Heart right ventricle (tissue), 16 donors: ENCODE measurements at regions of chr3 and their contacts with region 1.

Region 1: GRCh38 chr3:126752303-126752842 is 48.3 kb downstream of the CHCHD6 start:
- DNase-seq: peak; percentile 79 to 80
- ATAC-seq: peak; percentile 87 to 94 (median 91)
- H3K4me3 ChIP-seq: no peak overlapping the region
- H3K27ac ChIP-seq: no peak overlapping the region
- H3K4me1 ChIP-seq: peaks cover 0 to 40% (median 4%) of the 10 kb centered on the region in 9 donors
- H3K27me3 ChIP-seq: no peaks in the 10 kb centered on the region
- CTCF ChIP-seq: peak; percentile 66 to 93 (median 87)

Region 2: DNA sequence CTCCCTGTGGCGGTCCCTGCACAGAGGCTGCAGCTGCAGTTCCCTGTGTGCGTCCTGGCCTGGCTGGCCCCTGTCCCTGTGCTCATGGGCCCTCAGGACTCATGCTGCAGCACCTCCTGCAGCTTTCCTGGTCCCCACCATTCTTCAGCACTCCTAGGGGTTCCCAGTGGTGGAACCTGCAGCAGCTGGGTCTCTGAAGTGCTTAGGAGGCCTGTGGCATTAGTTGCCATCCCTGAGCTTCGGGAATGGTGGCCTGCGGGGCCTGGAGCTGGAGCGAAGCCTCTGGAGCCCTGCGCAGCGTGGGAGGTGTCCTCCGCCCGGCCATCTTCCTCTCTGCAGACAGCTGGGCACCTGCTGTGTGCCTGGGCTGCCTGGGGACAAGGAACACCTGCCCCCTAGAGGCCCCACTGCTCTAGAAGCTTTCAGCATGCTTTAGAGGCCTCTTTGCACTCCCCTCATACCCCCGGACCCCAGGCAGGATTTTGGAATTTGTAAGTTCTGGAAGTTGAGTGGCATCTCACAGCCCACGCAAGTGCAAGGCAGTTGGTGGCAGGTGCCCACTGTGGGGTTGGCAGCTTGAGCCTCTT is 243.6 kb after region 1 on chr3:
- intact Hi-C with region 1: loop called in 4 of 10 experiments (anchors 5 kb)
- DNase-seq: no peak
- ATAC-seq: no peak
- H3K4me3 ChIP-seq: no peak overlapping the region
- H3K27ac ChIP-seq: peak overlapping the region in 1 of 10 donors; percentile 77
- H3K4me1 ChIP-seq: peaks cover 30 to 99% (median 66%) of the 10 kb centered on the region in 9 donors
- H3K27me3 ChIP-seq: no peaks in the 10 kb centered on the region
- CTCF ChIP-seq: peak in 1 of 9 donors; percentile 17

Region 3: GRCh38 chr3:127002195-127003174 is 250.1 kb after region 1 on chr3:
- intact Hi-C with region 1: loop called in 2 of 10 experiments (anchors 5 kb)
- DNase-seq: peak; percentile 88 to 91
- ATAC-seq: peak; percentile 82 to 96 (median 91)
- H3K4me3 ChIP-seq: peak overlapping the region in 5 of 10 donors; percentile 10 to 34 (median 22)
- H3K27ac ChIP-seq: peak overlapping the region in 9 of 10 donors; percentile 56 to 86 (median 69)
- H3K4me1 ChIP-seq: peaks cover 8 to 60% (median 33%) of the 10 kb centered on the region in 9 donors
- H3K27me3 ChIP-seq: no peaks in the 10 kb centered on the region
- CTCF ChIP-seq: peak; percentile 21 to 79 (median 53)

Region 4: DNA sequence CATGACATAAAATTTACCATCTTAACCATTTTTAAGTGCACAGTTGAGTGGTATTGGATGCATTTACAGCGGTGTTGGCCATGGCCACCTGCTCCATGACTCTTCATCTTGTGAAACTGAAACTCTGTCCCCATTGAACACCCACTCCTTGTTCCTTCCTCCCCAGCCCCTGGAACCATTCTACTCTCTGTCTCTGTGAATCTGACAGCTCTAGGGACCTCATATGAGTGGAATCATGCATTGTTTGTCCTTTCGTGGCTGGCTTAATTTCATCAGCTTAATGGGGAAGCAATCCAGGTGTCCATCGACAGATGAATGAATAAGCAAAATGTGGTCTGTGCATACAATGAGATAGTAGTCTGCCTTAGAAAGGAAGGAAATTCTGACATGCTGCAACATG is 273.1 kb after region 1 on chr3:
- intact Hi-C with region 1: no loop called
- DNase-seq: no peak
- ATAC-seq: no peak
- H3K4me3 ChIP-seq: no peak overlapping the region
- H3K27ac ChIP-seq: no peak overlapping the region
- H3K4me1 ChIP-seq: peaks cover 0 to 13% (median 0%) of the 10 kb centered on the region in 9 donors
- H3K27me3 ChIP-seq: no peaks in the 10 kb centered on the region
- CTCF ChIP-seq: no peak

Region 5: DNA sequence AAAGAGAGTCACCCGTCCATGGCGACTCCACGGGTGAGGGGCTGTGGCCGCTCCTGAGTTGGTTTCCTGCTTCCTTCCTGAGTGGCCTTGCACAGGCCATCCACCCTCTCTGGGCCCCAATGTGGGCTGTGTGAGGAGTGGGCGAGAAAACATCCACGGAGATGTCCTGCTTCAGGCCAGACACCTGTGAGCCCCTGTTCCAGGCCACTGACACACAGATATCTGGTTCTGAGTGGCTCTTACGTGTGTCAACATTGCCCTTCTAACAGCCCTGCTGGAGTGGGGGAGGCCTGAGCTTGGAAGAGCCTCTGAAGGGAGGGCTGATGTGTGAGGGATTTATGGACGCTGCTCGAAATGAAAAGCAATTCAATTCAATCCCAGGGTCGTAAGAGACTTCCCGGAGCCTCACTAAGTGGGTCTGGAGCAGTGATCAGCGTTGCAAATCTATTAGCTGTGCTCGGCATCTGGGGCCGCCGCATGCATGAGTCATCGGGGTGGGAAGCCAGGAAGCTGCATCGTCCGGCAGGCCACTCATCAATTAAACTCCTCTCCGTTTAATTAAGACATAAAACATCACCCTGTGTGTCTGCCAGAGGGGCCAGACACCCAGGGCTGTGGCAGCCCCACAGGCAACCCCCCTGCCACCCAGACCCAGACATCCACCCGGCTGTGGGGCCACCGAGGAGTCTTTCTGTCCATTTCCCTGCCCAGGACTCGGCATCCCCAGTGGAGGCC is 420.6 kb after region 1 on chr3:
- intact Hi-C with region 1: loop called in 8 of 10 experiments (anchors 2 to 10 kb)
- DNase-seq: no peak
- ATAC-seq: peak in 1 of 8 donors; percentile 28
- H3K4me3 ChIP-seq: no peak overlapping the region
- H3K27ac ChIP-seq: no peak overlapping the region
- H3K4me1 ChIP-seq: peaks cover 0 to 8% (median 5%) of the 10 kb centered on the region in 9 donors
- H3K27me3 ChIP-seq: peaks cover 0 to 23% (median 9%) of the 10 kb centered on the region in 7 donors
- CTCF ChIP-seq: no peak

Region 6: DNA sequence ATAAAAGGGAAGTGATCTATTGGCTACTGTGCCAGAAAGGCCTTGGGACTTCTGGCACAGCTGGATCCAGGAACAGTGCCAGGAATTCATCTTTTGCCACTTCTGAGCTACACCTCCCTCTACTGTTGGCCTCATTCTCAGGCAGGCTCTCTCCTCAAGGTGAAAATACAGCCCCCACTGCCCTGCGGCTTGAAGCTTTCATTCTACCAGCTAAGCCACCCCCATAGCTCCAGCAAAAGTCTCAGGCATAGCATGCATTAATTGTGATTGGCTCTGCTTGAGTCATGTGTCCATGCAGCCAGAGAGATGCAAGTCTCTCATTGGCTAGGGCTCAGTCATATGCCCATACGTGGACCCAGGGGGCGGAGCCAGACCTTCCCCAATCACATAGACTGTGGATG is 695.8 kb after region 1 on chr3:
- intact Hi-C with region 1: loop called in 4 of 10 experiments (anchors 5 to 10 kb)
- DNase-seq: no peak
- ATAC-seq: peak in 4 of 8 donors; percentile 24 to 46 (median 36)
- H3K4me3 ChIP-seq: no peak overlapping the region
- H3K27ac ChIP-seq: no peak overlapping the region
- H3K4me1 ChIP-seq: no peaks in the 10 kb centered on the region
- H3K27me3 ChIP-seq: peaks cover 0 to 43% (median 20%) of the 10 kb centered on the region in 7 donors
- CTCF ChIP-seq: peak in 3 of 9 donors; percentile 16 to 27 (median 16)

Region 7: GRCh38 chr3:127455541-127456450 is 703.4 kb after region 1 on chr3:
- intact Hi-C with region 1: loop called in 8 of 10 experiments (anchors 2 to 10 kb)
- DNase-seq: peak; percentile 47 to 73
- ATAC-seq: peak; percentile 83 to 94 (median 89)
- H3K4me3 ChIP-seq: peak overlapping the region in 9 of 10 donors; percentile 12 to 42 (median 35)
- H3K27ac ChIP-seq: no peak overlapping the region
- H3K4me1 ChIP-seq: peaks cover 6 to 26% (median 21%) of the 10 kb centered on the region in 9 donors
- H3K27me3 ChIP-seq: peaks cover 15 to 78% (median 70%) of the 10 kb centered on the region in 7 donors
- CTCF ChIP-seq: peak; percentile 72 to 98 (median 92)

Region 8: DNA sequence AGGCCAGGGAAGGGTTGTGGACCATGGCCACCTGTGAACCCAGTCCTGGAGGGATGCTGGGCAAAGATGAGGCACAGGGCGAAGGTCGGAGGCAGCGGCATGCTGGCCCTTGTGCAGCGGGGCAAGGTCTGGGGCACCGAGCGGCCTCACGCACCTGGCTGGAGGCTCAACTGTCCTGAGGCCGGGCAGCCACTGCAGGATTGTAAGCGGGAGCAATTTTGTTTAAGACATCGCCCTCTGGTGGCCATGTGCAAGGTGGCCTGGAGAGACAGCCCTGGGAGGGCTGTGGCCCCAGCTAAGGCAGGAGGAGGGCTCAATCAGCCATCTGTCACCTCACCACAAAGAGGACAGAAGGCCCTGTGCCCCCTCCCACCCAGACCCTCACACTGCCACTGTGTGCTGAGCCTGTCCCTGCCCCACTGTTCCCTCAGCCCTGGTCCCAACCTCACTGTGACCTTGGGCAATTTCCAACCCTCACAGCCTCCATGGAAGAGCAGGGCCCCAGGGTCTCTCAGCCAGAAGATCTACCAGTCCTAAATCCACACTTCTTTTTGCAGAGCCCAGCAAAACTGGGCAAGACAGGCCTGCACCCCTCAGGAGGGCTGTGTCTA is 791.9 kb after region 1 on chr3:
- intact Hi-C with region 1: loop called in 7 of 10 experiments (anchors 5 to 10 kb)
- DNase-seq: peak; percentile 68 to 71
- ATAC-seq: peak in 7 of 8 donors; percentile 3 to 51 (median 45)
- H3K4me3 ChIP-seq: no peak overlapping the region
- H3K27ac ChIP-seq: no peak overlapping the region
- H3K4me1 ChIP-seq: peaks cover 0 to 21% (median 13%) of the 10 kb centered on the region in 9 donors
- H3K27me3 ChIP-seq: no peaks in the 10 kb centered on the region
- CTCF ChIP-seq: peak; percentile 63 to 85 (median 78)